GM10248 (cell line): ENCODE measurements at regions of chr7 and their contacts with region 1.

Region 1: DNA sequence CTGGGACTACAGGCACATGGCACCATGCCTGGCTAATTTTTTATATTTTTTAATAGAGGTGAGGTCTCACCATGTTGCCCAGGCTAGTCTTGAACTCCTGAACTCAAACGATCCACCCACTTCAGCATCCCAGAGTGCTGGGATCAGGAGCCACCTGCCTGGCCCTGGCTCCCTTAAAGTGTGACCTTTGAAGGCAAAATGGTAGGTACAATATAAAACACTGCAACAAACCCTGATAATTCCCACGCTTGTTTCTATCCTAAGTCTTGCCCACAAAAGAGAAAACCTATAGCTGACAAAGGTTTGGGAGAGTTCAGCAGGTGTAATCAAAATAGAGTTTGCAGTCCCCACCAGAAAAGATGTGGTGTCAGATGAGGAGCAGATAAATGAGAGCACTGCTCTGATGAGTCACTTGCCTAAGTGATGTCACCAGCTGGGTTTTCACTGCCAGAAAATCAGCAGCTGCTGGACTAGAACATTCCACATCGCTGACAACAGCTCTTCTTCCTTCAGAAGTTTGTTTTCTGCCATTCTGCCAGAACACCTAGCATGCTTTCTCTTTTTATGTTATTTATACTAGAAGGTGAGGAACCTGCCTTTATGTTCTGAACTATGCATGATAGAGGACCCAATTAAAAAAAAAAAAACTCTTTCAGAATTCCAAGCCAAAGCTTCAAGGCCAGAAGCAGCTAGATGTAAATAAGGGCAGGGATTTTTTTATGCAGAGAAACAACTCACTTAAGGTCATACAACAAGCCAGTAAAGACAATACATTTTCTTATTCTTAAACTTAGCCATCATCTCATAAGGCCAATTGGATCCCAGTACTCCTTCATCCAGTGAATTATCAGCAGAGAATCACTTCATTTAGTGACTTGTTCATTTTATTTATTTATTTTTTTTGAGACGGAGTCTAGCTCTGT is 18.0 kb downstream of the PURB start:
- DNase-seq: no peak
- CTCF ChIP-seq: no peak

Region 2: DNA sequence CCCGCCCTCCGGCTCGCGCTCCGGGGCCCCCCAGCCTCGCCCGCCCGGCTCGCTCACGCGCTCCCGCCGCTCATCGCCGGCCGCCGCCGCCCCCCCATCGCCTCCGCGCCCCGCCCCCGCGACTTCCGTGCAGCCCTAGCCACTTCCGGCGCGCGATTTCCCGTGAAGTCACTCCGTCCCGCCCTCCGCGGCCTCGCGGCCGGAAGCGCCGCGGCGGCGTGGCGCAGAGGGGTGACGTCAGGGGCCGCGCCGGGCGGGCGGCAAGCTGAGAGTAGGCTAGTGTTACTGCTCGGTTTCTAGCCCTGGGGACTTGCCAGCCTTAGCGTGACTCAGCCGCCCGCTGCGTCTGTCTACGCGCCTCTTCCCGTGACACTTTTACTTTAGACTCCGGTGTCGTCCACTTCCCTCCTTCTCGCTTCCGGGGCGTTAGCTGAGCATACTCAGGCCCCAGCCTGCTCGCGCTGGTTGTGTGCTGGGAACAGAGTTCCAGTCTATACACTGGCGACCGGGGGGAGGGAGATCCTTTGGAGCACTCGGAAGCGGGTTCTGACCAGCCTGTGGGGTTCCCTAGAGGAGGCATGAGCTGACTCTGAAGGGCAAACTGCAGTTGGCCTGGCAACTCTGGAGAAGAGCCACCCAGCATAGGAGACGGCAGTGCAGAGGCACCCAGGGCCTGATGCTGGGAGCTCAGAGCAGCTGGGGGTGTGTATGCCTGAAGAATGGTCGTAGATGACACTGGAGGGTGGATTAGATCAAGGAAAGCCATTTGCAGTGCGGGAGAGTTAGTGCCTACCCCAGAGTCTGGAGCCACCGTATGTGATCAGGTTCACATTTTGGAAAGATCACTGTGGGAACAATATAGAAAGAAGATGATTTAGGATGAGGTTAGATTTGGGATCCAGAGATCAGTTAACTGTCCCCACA is 18.3 kb after region 1 on chr7 and contains the start of gene PURB:
- CTCF ChIA-PET with region 1: interaction called, 11 read pairs
- POLR2A ChIA-PET with region 1: interaction called, 5 read pairs
- DNase-seq: peak; percentile 96
- CTCF ChIP-seq: no peak

Region 3: GRCh38 chr7:44911911-44912310 is 44.6 kb after region 1 on chr7:
- CTCF ChIA-PET with region 1: no interaction called
- POLR2A ChIA-PET with region 1: no interaction called
- DNase-seq: no peak
- CTCF ChIP-seq: no peak

Region 4: DNA sequence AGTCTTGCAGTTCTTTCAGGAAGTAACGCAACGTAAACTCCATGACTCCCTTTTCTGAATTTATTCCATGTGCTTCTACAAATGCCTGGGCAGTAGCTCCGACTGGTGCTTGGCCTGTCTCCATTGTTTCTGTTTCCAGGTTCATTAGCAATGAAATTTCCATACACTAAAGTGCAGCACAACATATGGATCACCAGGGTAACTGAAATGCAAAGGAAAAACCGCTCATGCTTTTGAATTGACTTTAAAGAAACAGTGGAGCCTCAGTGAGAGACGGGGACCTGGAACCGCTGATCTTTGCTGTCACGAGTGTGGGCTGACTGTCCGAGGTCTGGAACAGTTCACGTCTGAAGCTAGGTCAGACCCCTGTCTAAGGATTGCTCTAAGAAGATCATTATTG is 1180.2 kb after region 1 on chr7:
- CTCF ChIA-PET with region 1: no interaction called
- POLR2A ChIA-PET with region 1: no interaction called
- DNase-seq: no peak
- CTCF ChIP-seq: no peak